Psoas muscle (tissue), 8 donors: ENCODE measurements at regions of chr14 and their contacts with region 1.

Region 1: DNA sequence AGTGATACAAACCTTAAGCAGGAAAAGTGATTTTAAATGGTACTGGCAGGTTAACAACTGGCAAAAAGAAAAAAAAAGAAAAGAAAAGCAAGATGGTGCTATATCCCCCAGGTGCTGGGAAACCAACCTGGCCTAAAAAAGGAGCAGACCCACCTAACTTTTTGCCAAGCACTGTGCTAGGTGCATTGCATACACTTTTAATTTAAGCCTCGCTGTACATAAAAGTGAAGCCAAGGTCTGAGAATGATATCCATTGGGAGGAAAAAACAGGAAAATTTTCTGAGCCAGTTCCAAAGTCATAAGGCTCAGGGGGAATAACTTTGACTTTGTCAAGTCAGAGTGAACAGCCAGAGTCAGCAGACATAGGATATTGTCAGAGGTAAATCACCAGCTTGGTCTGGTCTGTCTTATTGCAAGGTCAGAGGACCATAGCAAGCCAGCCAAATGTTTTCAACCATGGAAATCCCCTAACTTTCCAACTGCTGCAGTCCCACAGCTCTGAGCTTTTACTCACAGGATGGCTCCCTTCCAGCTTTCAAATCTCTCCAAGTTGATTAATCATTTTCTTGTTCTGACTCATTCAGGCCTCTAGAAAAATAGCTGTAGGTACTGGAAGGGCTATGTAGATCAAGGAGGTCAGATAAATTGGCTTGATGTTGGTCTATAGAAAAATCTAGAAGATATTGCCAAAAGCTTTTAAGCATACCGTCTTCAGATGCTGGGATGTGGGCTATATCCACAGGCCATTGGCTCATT is 412.9 kb downstream of the RAD51B start:
- DNase-seq: no peak
- ATAC-seq: peak; percentile 96 to 97 (median 97)
- H3K4me3 ChIP-seq: no peak overlapping the region
- H3K27ac ChIP-seq: peak overlapping the region; percentile 90
- H3K4me1 ChIP-seq: peaks cover 51% of the 10 kb centered on the region
- H3K27me3 ChIP-seq: no peaks in the 10 kb centered on the region
- CTCF ChIP-seq: no peak

Region 2: DNA sequence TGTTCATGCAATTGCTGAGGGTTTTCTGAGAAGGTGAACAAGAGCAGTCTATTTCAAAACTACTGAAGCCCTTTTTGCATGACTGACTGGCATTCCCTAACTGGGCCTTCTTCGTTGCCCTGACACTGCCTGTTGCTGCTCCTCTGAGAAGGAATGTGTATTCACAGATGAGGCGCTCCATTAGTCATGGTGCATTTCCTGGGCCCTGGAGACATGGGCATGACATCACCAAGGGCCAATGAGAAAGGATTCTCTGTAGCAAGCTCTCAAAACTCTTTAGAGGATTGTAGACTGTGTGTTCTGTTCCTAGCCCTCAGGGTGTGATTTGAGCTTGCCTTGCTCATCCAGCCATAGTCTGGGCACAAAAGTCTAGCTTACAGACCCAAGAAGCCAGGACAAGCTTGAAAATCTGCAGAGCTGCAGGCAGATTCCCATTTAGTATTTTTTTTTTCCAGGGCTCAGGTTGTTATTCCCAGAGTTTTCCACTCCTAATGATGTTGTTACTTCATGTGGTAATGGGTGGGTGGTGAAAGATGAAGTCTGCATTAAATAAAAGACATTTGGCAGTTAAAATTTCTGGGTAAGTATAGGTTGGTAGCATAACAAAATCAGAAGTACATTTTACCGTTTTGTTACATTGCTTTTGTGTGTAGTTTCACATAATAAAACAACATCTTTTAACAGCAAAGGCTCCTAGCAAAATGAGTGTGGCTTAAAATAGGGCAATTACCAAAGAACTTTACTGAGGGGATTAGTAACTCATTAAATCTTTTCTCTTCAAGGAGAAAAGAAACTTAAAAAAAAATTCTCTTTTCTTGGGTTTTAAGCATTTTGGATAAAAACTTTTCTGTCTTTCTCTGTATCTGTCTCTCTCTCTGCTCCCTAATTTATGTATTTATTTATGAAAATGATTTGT is 94.5 kb before region 1 on chr14:
- intact Hi-C with region 1: loop called in 1 of 2 experiments (anchors 5 kb)
- DNase-seq: peak; percentile 60 to 69
- ATAC-seq: peak; percentile 85 to 95 (median 90)
- H3K4me3 ChIP-seq: no peak overlapping the region
- H3K27ac ChIP-seq: peak overlapping the region; percentile 81
- H3K4me1 ChIP-seq: peaks cover 50% of the 10 kb centered on the region
- H3K27me3 ChIP-seq: no peaks in the 10 kb centered on the region
- CTCF ChIP-seq: no peak

Region 3: DNA sequence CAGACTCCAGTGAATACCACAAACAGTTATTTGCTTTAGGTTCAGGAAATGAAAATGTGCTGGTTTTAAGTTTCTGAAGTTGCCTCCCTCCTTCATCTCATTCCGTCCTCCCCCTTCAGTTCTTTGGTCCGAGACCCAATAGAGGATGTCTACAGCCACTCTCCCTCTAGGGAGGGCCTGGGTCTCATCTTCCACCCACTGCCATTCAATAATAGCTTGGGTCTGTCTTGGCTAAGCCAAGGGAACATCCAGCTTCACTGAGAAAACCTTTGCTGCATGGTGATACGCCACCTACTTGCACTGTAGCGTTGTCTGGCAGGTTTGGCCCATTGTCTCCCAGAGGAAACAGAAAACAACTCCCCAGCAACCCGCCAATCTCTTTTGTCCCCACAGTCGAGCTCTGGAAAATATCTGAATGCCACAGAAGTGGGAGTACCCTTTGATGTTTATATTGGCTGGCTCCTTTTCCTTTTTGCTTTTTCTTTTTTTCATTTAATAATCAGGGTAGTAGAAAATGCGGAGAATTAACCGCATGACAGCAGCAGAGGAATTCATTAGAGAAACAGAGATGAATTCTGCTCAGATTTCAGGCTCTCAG is 32.8 kb before region 1 on chr14:
- intact Hi-C with region 1: loop called (anchors 5 kb)
- DNase-seq: no peak
- ATAC-seq: peak in 1 of 4 donors; percentile 17
- H3K4me3 ChIP-seq: no peak overlapping the region
- H3K27ac ChIP-seq: peak overlapping the region; percentile 62
- H3K4me1 ChIP-seq: peaks cover 33% of the 10 kb centered on the region
- H3K27me3 ChIP-seq: no peaks in the 10 kb centered on the region
- CTCF ChIP-seq: no peak

Region 4: GRCh38 chr14:68211886-68212285 is 20.6 kb before region 1 on chr14:
- intact Hi-C with region 1: loop called in 1 of 2 experiments (anchors 2 kb)
- DNase-seq: no peak
- ATAC-seq: no peak
- H3K4me3 ChIP-seq: no peak overlapping the region
- H3K27ac ChIP-seq: peak overlapping the region; percentile 73
- H3K4me1 ChIP-seq: peaks cover 38% of the 10 kb centered on the region
- H3K27me3 ChIP-seq: no peaks in the 10 kb centered on the region
- CTCF ChIP-seq: no peak